ENCODE measurements at regions of chr15 and their contacts with region 1.

Region 1: DNA sequence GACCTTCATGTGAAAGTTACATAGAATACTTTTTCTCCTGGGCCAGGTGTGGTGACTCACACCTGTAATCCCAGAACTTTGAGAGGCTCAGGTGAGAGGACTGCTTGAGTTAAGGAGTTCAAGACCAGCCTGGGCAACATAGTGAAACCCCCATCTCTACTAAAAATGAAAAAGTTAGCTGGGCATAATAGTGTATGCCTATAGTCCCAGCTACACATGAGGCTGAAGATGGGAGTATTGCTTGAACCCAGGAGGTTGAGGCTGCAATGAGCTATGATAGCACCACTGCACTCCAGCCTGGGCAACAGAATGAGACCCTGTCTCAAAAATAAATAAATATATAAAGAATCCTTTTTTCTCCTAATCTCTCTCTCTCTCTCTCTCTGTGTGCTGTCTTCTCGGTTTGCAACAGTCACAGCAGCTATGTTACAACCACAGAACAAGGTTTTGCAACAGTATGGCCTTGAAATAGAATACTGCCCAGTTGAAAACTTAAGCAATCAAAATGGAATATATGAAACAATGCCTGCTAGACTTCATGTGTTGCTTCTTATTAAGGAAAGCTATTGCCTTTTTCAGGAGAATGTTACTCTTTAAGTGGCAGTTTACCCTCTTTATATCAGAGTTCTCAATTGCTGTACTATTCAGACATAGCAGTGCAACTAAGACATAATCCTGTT is 12.3 kb upstream of the DENND4A start:
- DNase-seq: no peak
- H3K4me3 ChIP-seq: no peak overlapping the region
- H3K27ac ChIP-seq: no peak overlapping the region
- H3K27me3 ChIP-seq: no peaks in the 10 kb centered on the region
- CTCF ChIP-seq: no peak

Region 2: DNA sequence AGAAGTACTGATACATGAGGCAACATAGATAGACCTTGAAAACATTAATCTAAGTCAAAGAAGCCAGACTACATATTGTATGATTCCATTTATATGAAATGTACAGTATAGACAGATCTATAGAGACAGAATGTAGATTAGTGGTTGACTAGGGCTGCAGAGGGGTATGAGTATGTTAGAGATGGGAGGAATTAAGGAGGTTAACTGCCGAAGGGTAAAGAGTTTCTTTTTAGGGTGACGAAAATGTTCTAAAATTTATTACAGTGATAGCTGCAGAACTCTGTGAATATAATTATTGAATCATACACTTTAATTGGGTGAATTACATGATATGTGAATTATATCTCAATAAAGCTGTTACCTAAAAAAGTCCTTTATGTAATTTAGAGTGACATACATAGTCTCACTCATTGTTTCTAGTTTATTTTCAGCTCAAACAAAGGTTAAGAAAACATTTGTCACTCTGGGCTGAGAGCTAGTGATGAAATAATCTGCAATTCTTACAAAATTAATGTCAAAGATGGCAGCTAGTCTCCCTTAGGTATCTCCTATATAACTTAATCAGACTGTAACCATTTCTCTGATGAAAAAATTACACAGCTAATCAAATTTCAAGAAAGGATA is 73.7 kb before region 1 on chr15:
- CTCF ChIA-PET with region 1: no interaction called
- POLR2A ChIA-PET with region 1: no interaction called
- DNase-seq: no peak
- H3K4me3 ChIP-seq: no peak overlapping the region
- H3K27ac ChIP-seq: no peak overlapping the region
- H3K27me3 ChIP-seq: no peaks in the 10 kb centered on the region
- CTCF ChIP-seq: no peak

Region 3: DNA sequence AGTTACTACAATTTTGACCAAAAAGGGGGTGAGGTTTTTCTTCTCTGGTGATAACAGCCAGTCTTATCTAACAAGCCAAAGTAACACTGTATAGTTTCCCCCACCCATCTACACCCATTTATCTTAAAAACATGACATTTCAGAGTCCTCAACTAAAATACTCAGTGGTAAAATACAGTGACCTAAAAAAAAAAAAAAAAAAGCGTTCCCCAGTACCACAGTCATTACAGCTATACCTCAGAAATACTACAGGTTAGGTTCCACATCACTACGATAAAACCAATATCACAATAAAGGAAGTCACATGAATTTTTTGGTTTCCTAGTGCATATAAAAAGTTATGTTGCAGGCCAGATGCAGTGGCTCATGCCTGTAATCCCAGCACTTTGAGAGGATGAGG is 26.1 kb before region 1 on chr15:
- CTCF ChIA-PET with region 1: interaction called, 10 read pairs
- POLR2A ChIA-PET with region 1: no interaction called
- DNase-seq: no peak
- H3K4me3 ChIP-seq: no peak overlapping the region
- H3K27ac ChIP-seq: no peak overlapping the region
- H3K27me3 ChIP-seq: no peaks in the 10 kb centered on the region
- CTCF ChIP-seq: no peak

Region 4: DNA sequence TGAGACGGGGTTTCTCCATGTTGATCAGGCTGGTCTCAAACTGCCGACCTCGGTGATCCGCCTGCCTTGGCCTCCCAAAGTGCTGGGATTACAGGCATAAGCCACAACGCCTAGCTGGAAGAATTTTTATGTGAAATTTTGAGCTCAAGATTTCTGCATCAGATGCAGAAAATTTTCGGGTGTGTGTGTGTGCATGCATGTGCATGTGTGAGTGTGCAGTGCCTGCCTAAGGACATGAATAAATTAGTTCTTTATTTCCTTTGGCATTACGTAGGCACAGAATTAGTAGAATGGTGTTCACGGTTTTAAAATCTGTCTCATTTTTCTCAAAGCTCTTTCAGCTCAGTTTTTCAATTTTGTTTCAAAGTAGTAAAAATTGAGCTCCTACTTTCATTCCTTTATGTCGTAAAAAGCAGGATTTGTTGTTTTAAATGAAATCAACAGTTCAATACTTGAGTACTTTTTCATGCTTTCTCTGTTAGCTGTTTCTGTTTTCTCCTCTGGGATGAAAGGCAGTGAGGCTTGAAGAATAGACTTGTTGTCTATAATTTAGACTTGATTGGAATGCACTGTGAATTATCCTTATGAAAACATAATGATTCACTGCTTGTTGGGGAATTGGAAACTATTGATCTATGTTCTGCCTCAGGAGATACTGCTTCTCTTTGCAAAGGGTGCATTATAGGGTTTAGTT is 41.6 kb after region 1 on chr15:
- CTCF ChIA-PET with region 1: no interaction called
- POLR2A ChIA-PET with region 1: no interaction called
- DNase-seq: no peak
- H3K4me3 ChIP-seq: no peak overlapping the region
- H3K27ac ChIP-seq: no peak overlapping the region
- H3K27me3 ChIP-seq: no peaks in the 10 kb centered on the region
- CTCF ChIP-seq: no peak

Measured in AG04450 (cell line).